HEK293 (cell line): ENCODE measurements at regions of chr1 and their contacts with region 1.

Region 1: DNA sequence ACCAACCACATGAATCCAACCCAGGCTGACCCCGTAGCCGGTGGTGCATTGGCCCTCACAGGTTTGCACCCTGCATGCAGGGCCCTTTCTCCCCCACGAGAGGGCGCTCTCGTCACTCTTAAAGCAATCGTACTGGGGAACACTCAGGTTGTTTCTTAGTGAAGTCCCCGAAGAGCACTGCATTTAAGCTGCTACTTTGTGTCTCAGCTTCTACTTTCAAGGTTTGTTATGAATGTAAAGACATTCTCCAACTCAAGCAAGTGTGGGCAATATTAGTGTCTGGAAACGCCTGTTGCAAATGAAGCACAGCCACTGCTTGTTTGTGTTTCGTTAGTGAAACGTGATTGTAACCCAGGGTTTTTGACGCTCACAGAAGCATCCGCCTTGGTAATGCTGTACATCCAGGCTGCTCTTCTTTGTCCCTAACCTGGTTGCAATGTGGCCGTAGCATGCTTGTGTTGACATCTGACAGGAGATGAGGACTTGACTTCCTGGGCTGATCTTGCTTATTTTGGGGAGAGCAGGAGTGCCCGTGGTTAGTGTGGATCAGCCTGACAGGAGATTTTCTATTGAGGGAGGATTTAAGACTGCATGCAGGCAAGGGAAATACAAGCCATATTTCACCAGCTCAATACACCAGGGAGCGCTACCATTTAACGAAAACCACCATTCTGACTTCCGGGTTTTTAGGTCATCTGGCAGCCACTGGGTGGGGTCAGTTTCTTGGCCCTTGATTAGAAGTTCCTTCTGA is 79.8 kb downstream of the ST6GALNAC3 start:
- H3K4me3 ChIP-seq: no peak overlapping the region
- H3K27ac ChIP-seq: no peak overlapping the region
- H3K4me1 ChIP-seq: no peaks in the 10 kb centered on the region
- CTCF ChIP-seq: peak; percentile 84

Region 2: DNA sequence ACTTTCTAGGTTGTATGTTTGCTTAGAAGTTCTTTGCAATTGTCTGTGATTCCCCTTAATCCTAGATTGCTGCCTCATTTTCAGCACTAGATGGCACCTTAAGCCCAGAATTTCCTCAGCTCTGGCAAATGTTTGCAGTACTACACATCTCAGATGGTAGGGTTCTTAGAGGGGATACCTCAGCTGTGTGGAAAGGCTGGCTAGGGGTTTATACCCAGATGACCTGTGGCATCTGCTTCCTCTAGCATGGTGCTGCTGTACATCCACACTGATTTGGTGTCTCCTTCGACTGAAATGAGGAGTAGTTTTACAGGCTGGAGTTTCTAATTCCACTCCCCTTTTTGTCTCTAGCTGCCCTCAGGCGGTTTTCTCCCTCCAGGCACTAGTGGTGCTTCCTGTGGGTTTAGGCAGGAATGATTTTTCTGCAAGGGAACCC is 245.6 kb before region 1 on chr1:
- CTCF ChIA-PET with region 1: interaction called, 15 read pairs
- POLR2A ChIA-PET with region 1: no interaction called
- H3K4me3 ChIP-seq: no peak overlapping the region
- H3K27ac ChIP-seq: no peak overlapping the region
- H3K4me1 ChIP-seq: no peaks in the 10 kb centered on the region
- CTCF ChIP-seq: peak; percentile 33; the same call in 1 of the 2 replicates

Region 3: GRCh38 chr1:76053021-76053420 is 101.4 kb before region 1 on chr1:
- CTCF ChIA-PET with region 1: no interaction called
- POLR2A ChIA-PET with region 1: no interaction called
- H3K4me3 ChIP-seq: no peak overlapping the region
- H3K27ac ChIP-seq: no peak overlapping the region
- H3K4me1 ChIP-seq: no peaks in the 10 kb centered on the region
- CTCF ChIP-seq: no peak

Region 4: GRCh38 chr1:77126307-77126706 is 971.9 kb after region 1 on chr1:
- CTCF ChIA-PET with region 1: interaction called, 12 read pairs
- POLR2A ChIA-PET with region 1: no interaction called
- H3K4me3 ChIP-seq: no peak overlapping the region
- H3K27ac ChIP-seq: no peak overlapping the region
- H3K4me1 ChIP-seq: no peaks in the 10 kb centered on the region
- CTCF ChIP-seq: peak; percentile 53; the same call in 1 of the 2 replicates